Sigmoid colon (tissue), 7 donors: ENCODE measurements at regions of chrX and their contacts with region 1.

Region 1: DNA sequence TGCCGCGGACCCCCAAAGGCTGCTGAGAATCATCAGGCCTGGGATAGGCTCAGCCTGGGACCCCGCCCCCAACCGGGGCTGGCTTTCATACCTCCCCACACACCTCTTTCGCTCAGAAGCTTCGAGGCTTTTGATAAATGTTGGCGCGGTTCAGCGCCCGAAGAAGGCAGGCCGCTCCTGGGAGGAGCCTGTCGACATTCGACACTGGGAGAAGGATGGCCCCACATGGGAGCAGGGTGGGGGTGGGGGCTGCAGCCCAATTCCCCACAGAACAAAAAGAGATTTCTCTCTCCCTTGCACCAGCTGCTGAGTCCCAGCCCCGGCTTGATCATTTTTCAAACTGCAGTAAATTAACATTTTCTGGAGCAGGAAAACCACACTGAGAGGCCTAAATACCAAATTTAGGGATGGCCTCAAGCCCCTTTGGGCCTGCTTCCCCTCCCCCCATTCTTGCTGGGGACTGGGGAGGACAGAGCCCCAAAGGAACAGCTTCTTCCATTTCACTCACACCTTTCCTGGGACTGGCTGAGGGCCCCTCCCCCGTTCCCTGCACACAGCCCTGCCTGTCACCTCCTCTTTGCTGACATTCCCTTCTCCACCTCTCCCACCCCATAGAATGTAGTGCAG is 112.9 kb upstream of the PJA1 start:
- DNase-seq: no peak
- H3K4me3 ChIP-seq: no peak overlapping the region
- H3K27ac ChIP-seq: peak overlapping the region in 1 of 4 donors; percentile 16
- H3K4me1 ChIP-seq: peaks cover 0 to 41% (median 17%) of the 10 kb centered on the region in 4 donors
- H3K27me3 ChIP-seq: no peaks in the 10 kb centered on the region
- CTCF ChIP-seq: no peak
- EP300 ChIP-seq: no peak
- POLR2A ChIP-seq: no peak

Region 2: GRCh38 chrX:68902706-68903504 is 375.3 kb before region 1 on chrX:
- intact Hi-C with region 1: no loop called
- DNase-seq: no peak
- H3K4me3 ChIP-seq: no peak overlapping the region
- H3K27ac ChIP-seq: no peak overlapping the region
- H3K4me1 ChIP-seq: no peaks in the 10 kb centered on the region
- H3K27me3 ChIP-seq: no peaks in the 10 kb centered on the region
- CTCF ChIP-seq: no peak
- EP300 ChIP-seq: no peak
- POLR2A ChIP-seq: no peak

Region 3: DNA sequence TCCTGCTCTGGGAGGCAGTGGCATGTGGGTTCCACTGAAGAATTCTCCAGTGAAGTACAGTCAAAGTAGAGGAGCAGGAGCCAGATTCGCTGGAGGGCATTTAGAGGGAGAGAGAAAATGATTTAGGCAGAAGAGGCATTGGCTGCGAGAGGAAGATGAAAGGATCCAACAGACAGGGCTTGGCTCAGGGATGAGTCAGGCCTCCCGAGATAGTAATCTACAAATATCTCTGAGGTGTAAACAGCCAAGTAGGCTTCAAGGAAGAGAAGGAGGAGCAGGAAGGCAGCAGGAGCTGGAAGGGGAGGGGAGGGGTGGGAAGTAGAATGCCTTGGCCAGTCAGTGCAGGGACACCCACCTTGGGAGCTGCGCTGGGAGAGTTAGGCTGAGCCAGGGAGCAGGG is 168.5 kb before region 1 on chrX:
- intact Hi-C with region 1: no loop called
- DNase-seq: no peak
- H3K4me3 ChIP-seq: no peak overlapping the region
- H3K27ac ChIP-seq: peak overlapping the region in 2 of 4 donors; percentile 37 to 41
- H3K4me1 ChIP-seq: peaks cover 0 to 11% (median 5%) of the 10 kb centered on the region in 4 donors
- H3K27me3 ChIP-seq: peaks cover 0 to 3% (median 0%) of the 10 kb centered on the region in 3 donors
- CTCF ChIP-seq: no peak
- EP300 ChIP-seq: no peak
- POLR2A ChIP-seq: no peak

Region 4: GRCh38 chrX:69238114-69238886 is 39.9 kb before region 1 on chrX:
- intact Hi-C with region 1: loop called (anchors 5 kb)
- DNase-seq: peak; percentile 80
- H3K4me3 ChIP-seq: no peak overlapping the region
- H3K27ac ChIP-seq: peak overlapping the region; percentile 52 to 70 (median 64)
- H3K4me1 ChIP-seq: peaks cover 0 to 25% (median 12%) of the 10 kb centered on the region in 4 donors
- H3K27me3 ChIP-seq: no peaks in the 10 kb centered on the region
- CTCF ChIP-seq: no peak
- EP300 ChIP-seq: no peak
- POLR2A ChIP-seq: no peak

Region 5: GRCh38 chrX:69257499-69258127 is 20.6 kb before region 1 on chrX:
- intact Hi-C with region 1: no loop called
- DNase-seq: no peak
- H3K4me3 ChIP-seq: no peak overlapping the region
- H3K27ac ChIP-seq: no peak overlapping the region
- H3K4me1 ChIP-seq: peaks cover 0 to 9% (median 0%) of the 10 kb centered on the region in 4 donors
- H3K27me3 ChIP-seq: peaks cover 0 to 3% (median 0%) of the 10 kb centered on the region in 3 donors
- CTCF ChIP-seq: no peak
- EP300 ChIP-seq: no peak
- POLR2A ChIP-seq: no peak

Region 6: DNA sequence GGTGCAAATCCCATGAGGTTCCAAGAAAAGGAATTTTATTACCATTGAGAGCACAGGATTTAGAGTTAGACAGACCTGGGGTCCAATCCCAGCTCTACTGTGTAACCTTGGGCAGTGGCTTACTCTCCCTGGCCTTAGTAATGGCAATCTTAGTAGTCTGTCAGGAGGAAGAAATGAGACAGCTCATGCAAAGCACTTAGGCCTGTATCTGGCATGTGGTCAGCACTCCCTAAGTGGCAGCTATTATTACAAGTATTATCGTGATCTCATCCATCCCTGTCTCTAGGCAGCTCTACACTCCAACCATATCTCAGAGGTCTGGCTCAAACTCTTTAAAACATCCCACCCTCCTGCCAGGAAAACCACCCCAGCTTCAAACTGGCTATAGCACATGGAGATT is 96.4 kb after region 1 on chrX:
- intact Hi-C with region 1: no loop called
- DNase-seq: no peak
- H3K4me3 ChIP-seq: no peak overlapping the region
- H3K27ac ChIP-seq: no peak overlapping the region
- H3K4me1 ChIP-seq: no peaks in the 10 kb centered on the region
- H3K27me3 ChIP-seq: no peaks in the 10 kb centered on the region
- CTCF ChIP-seq: no peak
- EP300 ChIP-seq: no peak
- POLR2A ChIP-seq: no peak